ENCODE measurements at regions of chr11 and their contacts with region 1.

Region 1: DNA sequence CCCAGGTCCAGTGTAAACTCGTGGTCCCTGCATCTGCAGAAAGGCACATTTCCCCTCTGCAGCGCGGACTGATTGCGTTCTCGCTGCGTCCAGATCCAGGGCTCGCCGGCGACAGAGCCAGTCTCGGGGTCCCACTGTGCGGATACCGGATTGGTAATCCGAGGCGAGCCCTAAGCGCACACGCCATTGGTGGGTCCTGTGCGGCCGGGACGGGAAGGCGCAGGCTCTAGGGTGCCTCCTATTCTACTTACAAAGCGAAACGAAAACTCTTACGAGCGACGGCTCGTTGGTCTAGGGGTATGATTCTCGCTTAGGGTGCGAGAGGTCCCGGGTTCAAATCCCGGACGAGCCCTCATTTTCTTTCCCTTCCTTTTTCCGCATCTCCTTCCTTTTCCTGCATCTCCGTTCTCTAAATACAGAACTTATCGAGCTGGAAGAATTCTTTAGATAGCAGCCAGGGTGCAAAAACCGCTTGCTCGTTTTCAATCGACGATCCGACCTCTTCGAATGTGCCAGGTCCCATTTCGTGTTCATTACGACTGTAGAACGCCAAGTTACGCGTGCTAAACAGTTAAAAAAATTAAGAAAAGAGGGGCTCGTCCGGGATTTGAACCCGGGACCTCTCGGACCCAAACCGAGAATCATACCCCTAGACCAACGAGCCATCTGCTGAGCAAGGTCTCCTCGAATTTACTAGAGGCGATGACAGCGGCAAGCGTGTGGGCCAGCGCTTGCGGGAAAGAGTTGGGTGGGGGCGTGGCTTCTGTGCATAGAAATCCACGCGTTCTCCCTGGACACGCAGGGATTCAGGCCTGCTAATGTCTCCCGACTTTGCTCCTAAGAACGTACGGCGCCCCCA is 29.2 kb upstream of the WNT11 start:
- DNase-seq: peak; percentile 94
- ATAC-seq: peak; percentile 91
- H3K4me3 Mint-ChIP-seq: peak overlapping the region; percentile 83
- H3K27ac Mint-ChIP-seq: peak overlapping the region; percentile 94
- H3K4me1 Mint-ChIP-seq: peaks cover 49% of the 10 kb centered on the region
- H3K27me3 Mint-ChIP-seq: peaks cover 3% of the 10 kb centered on the region

Region 2: GRCh38 chr11:75562048-75562835 is 673.2 kb before region 1 on chr11 and contains the start of gene SERPINH1:
- CTCF ChIA-PET with region 1: no interaction called
- POLR2A ChIA-PET with region 1: no interaction called
- intact Hi-C with region 1: loop called in 1 of 2 experiments (anchors 1 kb)
- DNase-seq: peak; percentile 88
- ATAC-seq: peak; percentile 93
- H3K4me3 Mint-ChIP-seq: peak within 1 kb of the TSS; percentile 99
- H3K27ac Mint-ChIP-seq: peak within 1 kb of the TSS; percentile 98
- H3K4me1 Mint-ChIP-seq: peaks cover 28% of the 10 kb centered on the region
- H3K27me3 Mint-ChIP-seq: no peaks in the 10 kb centered on the region
- total RNA-seq, gene SERPINH1: 20.3 to 23.1 TPM

Region 3: DNA sequence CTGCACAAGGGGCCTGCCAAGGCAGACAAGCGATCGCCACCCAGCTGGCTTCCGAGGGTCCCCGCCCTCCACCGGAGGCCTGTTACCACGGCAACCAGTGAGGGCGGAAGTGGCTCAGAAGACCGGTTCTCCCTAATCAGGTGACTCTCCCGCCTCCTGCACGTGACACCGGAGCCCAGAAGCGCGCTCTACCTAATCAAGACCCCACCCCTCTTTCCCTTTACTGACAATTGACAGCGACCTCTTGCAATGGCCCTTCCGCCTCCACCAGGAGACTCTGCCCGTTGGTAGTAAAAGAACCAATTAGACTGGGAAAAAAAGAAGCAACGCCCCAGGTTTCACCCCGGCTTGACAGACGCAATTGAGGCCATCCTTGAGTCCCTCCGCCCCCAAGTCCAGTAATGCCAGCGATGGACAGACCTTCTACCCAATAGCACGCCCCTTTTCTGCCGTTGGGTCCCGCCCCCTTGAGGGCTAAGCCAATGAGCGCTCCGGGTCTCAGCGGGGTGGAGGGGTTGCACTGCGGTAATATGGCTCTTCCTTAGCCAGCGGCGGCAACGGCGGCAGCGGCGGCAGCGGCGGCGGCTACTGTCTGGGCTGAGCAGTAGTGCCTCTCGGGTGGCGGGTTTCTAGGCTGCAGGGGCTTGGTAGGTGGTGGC is 420.6 kb before region 1 on chr11 and contains the start of gene UVRAG:
- CTCF ChIA-PET with region 1: no interaction called
- POLR2A ChIA-PET with region 1: no interaction called
- intact Hi-C with region 1: loop called in 1 of 2 experiments (anchors 1 kb)
- DNase-seq: peak; percentile 98
- ATAC-seq: peak; percentile 93
- H3K4me3 Mint-ChIP-seq: no peak within 1 kb of the TSS
- H3K27ac Mint-ChIP-seq: peak within 1 kb of the TSS; percentile 80
- H3K4me1 Mint-ChIP-seq: peaks cover 16% of the 10 kb centered on the region
- H3K27me3 Mint-ChIP-seq: no peaks in the 10 kb centered on the region
- total RNA-seq, gene UVRAG: 11.4 to 13.4 TPM

Region 4: GRCh38 chr11:76207642-76208401 is 27.6 kb before region 1 on chr11:
- CTCF ChIA-PET with region 1: interaction called, 72 read pairs
- POLR2A ChIA-PET with region 1: interaction called, 3 read pairs
- intact Hi-C with region 1: loop called (anchors 1 kb)
- DNase-seq: peak; percentile 87
- ATAC-seq: peak; percentile 76
- H3K4me3 Mint-ChIP-seq: peak overlapping the region; percentile 60
- H3K27ac Mint-ChIP-seq: no peak overlapping the region
- H3K4me1 Mint-ChIP-seq: peaks cover 15% of the 10 kb centered on the region
- H3K27me3 Mint-ChIP-seq: peaks cover 55% of the 10 kb centered on the region

Region 5: GRCh38 chr11:76355172-76355571 is 119.7 kb after region 1 on chr11:
- CTCF ChIA-PET with region 1: no interaction called
- POLR2A ChIA-PET with region 1: no interaction called
- intact Hi-C with region 1: no loop called
- DNase-seq: no peak
- ATAC-seq: no peak
- H3K4me3 Mint-ChIP-seq: no peak overlapping the region
- H3K27ac Mint-ChIP-seq: no peak overlapping the region
- H3K4me1 Mint-ChIP-seq: peaks cover 4% of the 10 kb centered on the region
- H3K27me3 Mint-ChIP-seq: no peaks in the 10 kb centered on the region

Region 6: GRCh38 chr11:76436020-76436419 is 200.6 kb after region 1 on chr11:
- CTCF ChIA-PET with region 1: no interaction called
- POLR2A ChIA-PET with region 1: no interaction called
- intact Hi-C with region 1: no loop called
- DNase-seq: no peak
- ATAC-seq: peak; percentile 60
- H3K4me3 Mint-ChIP-seq: no peak overlapping the region
- H3K27ac Mint-ChIP-seq: no peak overlapping the region
- H3K4me1 Mint-ChIP-seq: peaks cover 12% of the 10 kb centered on the region
- H3K27me3 Mint-ChIP-seq: no peaks in the 10 kb centered on the region

Region 7: DNA sequence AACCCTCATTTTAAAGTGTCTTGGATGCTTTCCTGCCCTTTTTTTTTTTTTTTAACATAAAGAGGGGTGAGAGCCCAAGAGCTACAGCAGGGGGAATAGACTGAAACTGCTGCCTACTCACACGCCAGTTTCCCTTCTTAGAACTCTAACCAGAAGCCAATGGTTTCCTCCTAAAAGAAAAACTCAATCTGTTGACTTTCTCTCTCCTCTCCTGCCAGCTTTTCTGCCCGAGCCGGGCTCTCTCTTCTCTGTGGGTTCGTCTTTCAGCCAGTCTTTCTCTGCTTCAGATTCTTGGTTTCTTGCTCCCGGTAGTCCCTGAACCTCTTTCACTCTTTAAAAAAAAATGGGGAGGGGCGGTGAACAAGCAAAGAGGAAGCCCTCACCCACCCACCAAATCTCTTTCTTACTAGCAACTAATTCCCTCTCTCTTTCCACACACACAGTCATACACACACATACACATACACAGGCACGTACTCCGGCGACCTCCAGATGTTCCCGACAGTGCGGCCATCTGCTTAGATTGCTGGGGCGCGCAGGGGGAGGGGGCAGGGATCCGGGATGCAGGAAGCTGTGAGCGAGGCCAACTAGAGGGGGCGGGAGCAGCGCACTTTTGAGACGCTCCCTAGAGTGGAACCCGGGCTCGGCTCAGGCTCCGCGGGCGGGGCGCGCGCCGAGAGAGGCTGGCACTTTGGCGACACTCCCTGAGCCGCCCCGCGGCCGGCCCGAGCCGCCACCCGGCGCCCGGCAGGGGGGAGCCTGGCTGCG is 547.2 kb after region 1 on chr11:
- CTCF ChIA-PET with region 1: no interaction called
- POLR2A ChIA-PET with region 1: no interaction called
- intact Hi-C with region 1: loop called in 1 of 2 experiments (anchors 2 kb)
- DNase-seq: peak; percentile 91
- ATAC-seq: peak; percentile 89
- H3K4me3 Mint-ChIP-seq: peak overlapping the region; percentile 69
- H3K27ac Mint-ChIP-seq: peak overlapping the region; percentile 96
- H3K4me1 Mint-ChIP-seq: peaks cover 15% of the 10 kb centered on the region
- H3K27me3 Mint-ChIP-seq: peaks cover 41% of the 10 kb centered on the region

Region 8: GRCh38 chr11:76860539-76861475 is 625.3 kb after region 1 on chr11 and contains the start of gene ACER3:
- CTCF ChIA-PET with region 1: no interaction called
- POLR2A ChIA-PET with region 1: no interaction called
- intact Hi-C with region 1: loop called in 1 of 2 experiments (anchors 2 kb)
- DNase-seq: peak; percentile 94
- ATAC-seq: peak; percentile 99
- H3K4me3 Mint-ChIP-seq: peak within 1 kb of the TSS; percentile 72
- H3K27ac Mint-ChIP-seq: peak within 1 kb of the TSS; percentile 70
- H3K4me1 Mint-ChIP-seq: peaks cover 20% of the 10 kb centered on the region
- H3K27me3 Mint-ChIP-seq: no peaks in the 10 kb centered on the region
- total RNA-seq, gene ACER3: 8.9 to 10.3 TPM